KBM-7 (cell line): ENCODE measurements at regions of chr17 and their contacts with region 1.

Region 1: DNA sequence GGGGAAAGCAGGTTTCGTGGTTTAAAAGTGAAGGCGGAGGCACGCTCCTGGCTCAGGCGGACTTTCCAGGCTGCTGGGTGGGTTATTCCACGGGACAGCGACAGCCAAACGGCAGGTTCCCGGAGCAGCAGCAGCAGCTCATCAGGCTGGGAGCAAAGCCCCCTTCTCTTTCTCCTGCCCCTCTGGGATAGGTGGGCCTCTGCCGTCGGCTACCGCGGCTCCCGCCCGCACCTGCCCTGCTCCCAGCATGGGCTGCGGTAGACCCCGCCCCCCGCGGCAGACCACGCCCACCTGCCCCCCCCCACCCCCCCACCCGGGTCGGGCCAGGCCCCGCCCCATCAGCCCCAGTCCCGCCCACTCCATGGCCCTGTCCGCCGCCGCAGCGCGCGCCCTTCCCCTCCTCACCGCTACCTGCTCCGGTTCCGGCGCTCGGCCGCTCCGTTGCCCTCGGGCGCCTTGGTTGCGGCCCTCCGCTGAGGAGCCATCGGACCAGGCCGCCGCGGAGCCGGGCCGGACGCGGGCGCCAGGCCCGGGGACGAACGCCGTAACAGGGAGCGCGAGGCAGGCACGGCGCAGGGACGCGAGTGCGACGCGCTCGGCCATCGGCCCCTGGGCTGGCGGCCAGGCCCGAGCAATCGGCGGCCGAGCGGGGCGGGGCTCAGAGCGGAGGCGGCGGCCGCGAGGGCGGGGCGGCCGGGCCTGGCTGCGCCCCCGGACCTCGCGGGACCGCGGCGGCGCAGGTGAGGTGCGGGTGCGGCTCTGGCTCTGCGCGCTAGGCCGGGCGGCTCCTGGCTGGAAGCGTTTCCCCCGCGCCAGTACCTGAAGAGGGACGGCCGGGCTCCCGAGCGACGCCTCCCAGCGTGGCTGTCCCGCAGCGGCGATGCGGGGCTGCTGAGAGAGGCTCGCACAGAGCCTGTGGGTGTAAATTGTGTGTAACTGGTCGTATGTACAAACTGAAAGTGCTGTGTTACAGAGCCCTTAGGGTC is at the starts of genes HEXD and OGFOD3:
- DNase-seq: peak; percentile 82

Region 2: DNA sequence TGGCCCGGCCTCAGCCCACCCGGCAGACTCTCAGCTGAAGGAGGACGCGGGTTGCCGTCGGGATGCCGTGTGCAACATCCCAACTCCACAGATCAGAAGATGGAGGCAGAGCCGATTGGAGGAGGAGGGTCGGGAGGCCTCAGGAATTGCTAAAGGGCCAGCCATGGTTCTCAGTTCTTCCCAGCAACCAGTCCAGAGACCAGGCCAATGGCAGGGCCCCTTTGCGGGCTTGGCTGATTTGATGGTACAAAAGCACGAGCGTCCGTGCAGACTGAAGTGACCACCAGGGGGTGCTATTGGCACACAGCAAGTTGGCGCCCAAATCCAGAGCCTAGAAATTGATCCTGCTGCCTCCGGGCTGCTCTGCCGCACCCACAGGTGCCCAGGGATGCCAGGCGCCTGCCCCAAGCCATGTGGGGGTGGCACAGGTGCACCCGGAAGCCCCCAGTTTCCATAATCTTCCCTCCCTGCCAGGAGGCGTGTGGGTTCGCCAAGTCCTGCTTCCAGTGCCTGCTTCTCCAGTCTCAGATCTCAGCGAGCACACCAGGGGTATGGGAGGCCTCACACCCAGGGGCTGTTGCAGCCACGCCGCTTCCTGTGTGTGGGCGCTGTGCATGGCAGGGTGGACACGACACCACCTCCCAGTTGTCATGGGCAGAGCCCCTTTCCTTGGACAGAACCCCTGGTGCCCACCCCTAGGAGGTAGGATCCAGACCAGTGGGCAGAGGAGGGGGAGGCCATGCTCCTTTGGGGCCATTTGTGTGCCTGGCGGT is 66.4 kb before region 1 on chr17:
- in situ Hi-C with region 1: loop called (anchors 10 kb)
- DNase-seq: peak; percentile 91